ENCODE measurements at regions of chr1 and their contacts with region 1.

Region 1: DNA sequence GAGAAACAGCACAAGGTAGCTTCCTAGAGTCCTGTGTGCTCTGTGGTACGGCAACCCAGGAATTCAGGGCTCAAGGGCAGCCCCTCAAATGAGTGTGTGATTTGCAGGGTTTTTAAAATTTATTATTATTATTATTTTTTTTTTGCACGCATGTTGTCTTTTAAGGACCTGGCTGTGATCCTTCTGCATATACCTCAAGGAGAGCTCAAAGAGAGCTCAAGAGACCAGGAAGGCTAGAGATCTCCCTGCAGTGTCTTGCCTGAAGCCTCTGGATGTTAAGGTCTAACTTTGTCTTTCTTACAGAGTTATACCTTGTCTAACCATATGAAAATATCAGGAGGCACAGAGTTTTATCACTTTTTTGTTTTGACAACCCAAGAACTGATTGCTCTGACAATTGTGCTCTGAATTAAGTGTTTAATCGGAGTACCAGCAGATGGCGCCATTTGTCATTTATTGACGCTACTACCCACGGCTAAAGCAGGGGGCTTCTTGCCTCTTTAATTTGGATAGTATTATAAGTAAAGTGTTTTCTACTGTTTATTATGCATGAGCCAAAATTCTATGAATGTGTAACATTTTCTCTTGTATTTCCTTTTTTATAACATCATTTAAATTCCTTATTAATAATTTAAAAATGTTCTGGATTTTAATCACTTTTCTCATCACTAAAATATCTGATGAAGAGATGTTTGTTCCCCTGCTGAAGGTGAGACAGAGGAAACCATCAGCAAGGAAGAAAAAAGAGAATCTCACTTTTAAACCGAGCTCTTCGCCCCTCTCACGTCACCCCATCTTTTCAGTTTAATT is 35.8 kb upstream of the LMO4 start:
- DNase-seq: peak in 4 of 10 donors; percentile 31 to 61 (median 48)
- H3K4me3 ChIP-seq: no peak overlapping the region
- H3K27ac ChIP-seq: no peak overlapping the region
- H3K27me3 ChIP-seq: no peaks in the 10 kb centered on the region
- CTCF ChIP-seq: peak; percentile 63 to 95 (median 85)

Region 2: DNA sequence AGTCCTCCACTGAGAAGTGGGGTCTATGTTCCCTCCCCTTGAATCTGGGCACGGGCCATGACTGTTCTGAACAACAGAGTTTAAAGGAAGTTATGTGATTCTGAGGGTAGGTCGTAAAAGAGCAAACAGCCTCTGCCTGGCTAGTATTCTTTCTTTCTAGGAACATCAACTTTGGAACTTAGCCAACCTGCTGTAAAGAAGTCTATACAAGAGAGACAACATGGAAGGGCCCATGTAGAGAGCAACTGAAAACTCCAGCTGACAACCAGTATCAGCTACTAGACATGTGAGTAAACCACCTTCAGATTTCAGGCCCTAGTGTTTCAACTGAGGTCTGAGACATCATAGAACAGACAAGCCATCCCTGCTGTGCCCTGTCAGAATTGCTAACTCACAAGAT is 386.5 kb before region 1 on chr1:
- intact Hi-C with region 1: no loop called
- DNase-seq: no peak
- H3K4me3 ChIP-seq: no peak overlapping the region
- H3K27ac ChIP-seq: no peak overlapping the region
- H3K27me3 ChIP-seq: no peaks in the 10 kb centered on the region
- CTCF ChIP-seq: no peak

Region 3: DNA sequence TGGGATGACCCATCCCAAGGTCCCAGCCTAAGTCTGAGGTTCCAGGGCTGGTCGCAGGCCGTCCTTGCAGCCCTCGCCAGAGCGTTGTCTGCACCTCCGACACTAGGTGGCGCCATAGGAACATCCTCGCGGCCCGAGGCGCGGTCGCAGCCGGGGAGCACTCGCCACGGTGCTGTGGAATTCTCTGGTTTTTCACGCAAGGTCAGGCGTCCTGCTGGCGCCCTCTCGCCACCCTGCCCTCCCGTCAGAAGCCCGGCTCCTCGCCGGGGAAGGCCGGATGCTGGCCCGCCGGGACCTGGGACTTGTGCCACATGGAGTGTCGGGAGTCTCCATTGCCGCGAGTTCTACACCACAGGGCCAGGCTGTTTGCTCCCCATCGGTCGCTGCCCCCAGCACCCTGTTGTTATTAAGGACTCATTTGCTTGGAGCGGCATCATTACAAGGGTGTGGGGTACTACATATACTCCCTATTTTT is 161.0 kb before region 1 on chr1:
- intact Hi-C with region 1: loop called (anchors 5 to 10 kb)
- DNase-seq: peak; percentile 63 to 91 (median 78)
- H3K4me3 ChIP-seq: peak overlapping the region; percentile 22 to 67 (median 51)
- H3K27ac ChIP-seq: peak overlapping the region in 52 of 59 donors; percentile 11 to 91 (median 72)
- H3K27me3 ChIP-seq: no peaks in the 10 kb centered on the region
- CTCF ChIP-seq: peak; percentile 75 to 99 (median 96)

Region 4: DNA sequence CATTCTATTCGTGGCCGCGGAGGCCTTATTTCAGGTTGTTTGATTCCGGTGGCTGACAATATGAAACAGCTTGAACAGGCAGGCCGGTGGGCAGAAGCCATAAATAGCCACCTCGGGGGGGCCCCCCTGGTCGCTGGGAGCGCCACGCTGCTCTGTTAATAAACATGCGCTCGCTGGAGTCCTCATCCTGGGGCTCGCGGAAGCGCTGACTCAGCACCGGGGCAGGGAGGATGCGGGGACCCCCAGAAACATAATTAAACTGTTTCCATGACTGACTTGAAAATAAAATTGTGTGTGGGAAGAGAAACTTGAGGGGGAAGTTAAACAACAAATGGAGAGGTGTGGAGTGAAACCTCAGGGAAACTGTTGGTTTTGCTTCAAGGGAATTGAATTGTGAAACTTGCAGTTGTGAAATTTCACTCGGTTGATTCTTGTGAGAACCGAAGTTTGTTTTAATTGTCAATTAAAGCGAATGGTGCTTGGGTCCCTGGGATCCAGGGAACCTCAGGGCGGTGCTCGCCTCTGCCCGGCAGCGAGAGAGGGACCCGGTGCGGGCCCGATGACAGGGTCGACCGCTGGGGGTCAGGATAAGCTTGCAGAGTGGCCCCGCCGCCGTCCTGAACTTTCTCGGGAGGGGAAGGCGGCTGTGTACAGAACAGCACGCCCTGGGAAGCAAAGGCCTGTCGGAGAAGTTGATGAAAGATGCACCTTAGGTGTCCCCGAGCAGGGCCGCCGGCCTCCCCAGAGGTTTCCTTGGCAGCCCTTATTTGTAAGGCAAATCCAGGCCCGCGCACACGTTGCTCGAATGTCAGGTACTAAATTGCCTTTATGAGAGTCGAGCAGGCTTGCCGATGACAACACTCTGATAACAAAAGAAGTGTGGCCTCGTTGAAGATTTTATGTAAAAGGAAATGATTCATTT is 141.1 kb before region 1 on chr1:
- intact Hi-C with region 1: loop called in 1 of 2 experiments (anchors 5 kb)
- DNase-seq: peak in 9 of 10 donors; percentile 43 to 70 (median 60)
- H3K4me3 ChIP-seq: peak overlapping the region in 49 of 59 donors; percentile 6 to 55 (median 31)
- H3K27ac ChIP-seq: peak overlapping the region in 52 of 59 donors; percentile 4 to 78 (median 58)
- H3K27me3 ChIP-seq: no peaks in the 10 kb centered on the region
- CTCF ChIP-seq: peak in 53 of 56 donors; percentile 22 to 74 (median 52)

Region 5: GRCh38 chr1:87200875-87201638 is 91.8 kb before region 1 on chr1:
- intact Hi-C with region 1: no loop called
- DNase-seq: no peak
- H3K4me3 ChIP-seq: no peak overlapping the region
- H3K27ac ChIP-seq: no peak overlapping the region
- H3K27me3 ChIP-seq: peaks cover 0 to 2% (median 0%) of the 10 kb centered on the region in 45 donors
- CTCF ChIP-seq: no peak

Region 6: GRCh38 chr1:87953732-87954344 is 660.9 kb after region 1 on chr1:
- intact Hi-C with region 1: loop called (anchors 2 to 5 kb)
- DNase-seq: peak in 8 of 10 donors; percentile 25 to 71 (median 62)
- H3K4me3 ChIP-seq: no peak overlapping the region
- H3K27ac ChIP-seq: peak overlapping the region in 8 of 59 donors; percentile 3 to 46 (median 41)
- H3K27me3 ChIP-seq: no peaks in the 10 kb centered on the region
- CTCF ChIP-seq: peak; percentile 45 to 87 (median 76)

Region 7: GRCh38 chr1:88061492-88062177 is 768.7 kb after region 1 on chr1:
- intact Hi-C with region 1: loop called in 1 of 2 experiments (anchors 10 kb)
- DNase-seq: peak in 2 of 10 donors; percentile 44 to 56
- H3K4me3 ChIP-seq: no peak overlapping the region
- H3K27ac ChIP-seq: peak overlapping the region in 1 of 59 donors; percentile 9
- H3K27me3 ChIP-seq: no peaks in the 10 kb centered on the region
- CTCF ChIP-seq: peak; percentile 12 to 68 (median 51)

Region 8: GRCh38 chr1:88180449-88181108 is 887.7 kb after region 1 on chr1:
- intact Hi-C with region 1: loop called in 1 of 2 experiments (anchors 10 kb)
- DNase-seq: peak; percentile 36 to 83 (median 72)
- H3K4me3 ChIP-seq: no peak overlapping the region
- H3K27ac ChIP-seq: peak overlapping the region in 24 of 59 donors; percentile 1 to 66 (median 22)
- H3K27me3 ChIP-seq: no peaks in the 10 kb centered on the region
- CTCF ChIP-seq: peak; percentile 32 to 98 (median 91)

Measured in dorsolateral prefrontal cortex (tissue), 120 donors.